Activated CD4-positive, alpha-beta T cell treated with anti-CD3 and anti-CD28 coated beads for 36 hours (primary cell): ENCODE measurements at regions of chr17 and their contacts with region 1.

Region 1: DNA sequence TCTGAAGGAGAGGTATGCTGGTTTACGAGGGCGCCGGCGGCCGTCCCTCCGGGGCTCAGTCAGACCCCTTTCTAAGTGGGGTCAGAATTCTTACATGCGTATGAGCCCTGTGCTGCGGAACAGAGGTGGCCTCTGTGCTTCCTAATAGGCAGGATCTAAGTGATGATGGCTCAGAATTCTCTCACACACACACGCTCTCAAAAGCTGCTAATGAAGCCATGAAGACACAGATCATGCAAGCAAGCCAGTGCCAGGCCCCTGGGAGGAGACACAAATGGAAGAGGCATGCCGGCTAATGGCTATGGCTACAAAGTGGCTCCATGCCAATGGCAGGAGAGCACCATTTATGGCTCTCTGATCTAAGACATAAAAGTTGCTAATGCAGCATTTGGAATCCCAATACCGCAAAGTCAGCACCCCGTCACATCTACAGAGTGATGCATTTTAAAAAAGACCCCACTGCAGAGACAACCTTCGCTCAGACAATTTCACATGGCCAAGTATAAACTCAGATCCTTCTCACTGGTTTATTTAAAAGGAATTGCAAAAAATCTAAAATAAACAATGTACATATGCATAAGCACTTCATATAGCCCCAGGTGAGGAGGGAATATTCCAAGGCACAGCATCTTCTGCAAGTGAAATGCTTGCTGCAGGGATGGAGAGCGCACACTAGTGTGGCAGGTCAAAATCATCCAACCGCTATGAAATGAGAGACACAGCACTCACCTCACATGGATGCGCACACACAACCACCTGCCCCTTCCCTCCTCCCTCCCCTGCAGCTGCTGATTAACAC is 24.5 kb downstream of the NPLOC4 start:
- DNase-seq: no peak
- ATAC-seq: no peak
- H3K4me3 Mint-ChIP-seq: no peak overlapping the region
- H3K27ac Mint-ChIP-seq: no peak overlapping the region
- H3K4me1 Mint-ChIP-seq: peaks cover 19% of the 10 kb centered on the region
- H3K27me3 Mint-ChIP-seq: no peaks in the 10 kb centered on the region

Region 2: GRCh38 chr17:81593105-81593871 is 19.1 kb before region 1 on chr17:
- CTCF ChIA-PET with region 1: no interaction called
- POLR2A ChIA-PET with region 1: no interaction called
- intact Hi-C with region 1: no loop called
- DNase-seq: no peak
- ATAC-seq: no peak
- H3K4me3 Mint-ChIP-seq: no peak overlapping the region
- H3K27ac Mint-ChIP-seq: no peak overlapping the region
- H3K4me1 Mint-ChIP-seq: no peaks in the 10 kb centered on the region
- H3K27me3 Mint-ChIP-seq: no peaks in the 10 kb centered on the region

Region 3: GRCh38 chr17:81631482-81631881 is 19.1 kb after region 1 on chr17:
- CTCF ChIA-PET with region 1: interaction called, 4 read pairs
- POLR2A ChIA-PET with region 1: interaction called, 3 read pairs
- intact Hi-C with region 1: loop called in 1 of 2 experiments (anchors 2 kb)
- DNase-seq: no peak
- ATAC-seq: no peak
- H3K4me3 Mint-ChIP-seq: no peak overlapping the region
- H3K27ac Mint-ChIP-seq: no peak overlapping the region
- H3K4me1 Mint-ChIP-seq: peaks cover 20% of the 10 kb centered on the region
- H3K27me3 Mint-ChIP-seq: no peaks in the 10 kb centered on the region

Region 4: DNA sequence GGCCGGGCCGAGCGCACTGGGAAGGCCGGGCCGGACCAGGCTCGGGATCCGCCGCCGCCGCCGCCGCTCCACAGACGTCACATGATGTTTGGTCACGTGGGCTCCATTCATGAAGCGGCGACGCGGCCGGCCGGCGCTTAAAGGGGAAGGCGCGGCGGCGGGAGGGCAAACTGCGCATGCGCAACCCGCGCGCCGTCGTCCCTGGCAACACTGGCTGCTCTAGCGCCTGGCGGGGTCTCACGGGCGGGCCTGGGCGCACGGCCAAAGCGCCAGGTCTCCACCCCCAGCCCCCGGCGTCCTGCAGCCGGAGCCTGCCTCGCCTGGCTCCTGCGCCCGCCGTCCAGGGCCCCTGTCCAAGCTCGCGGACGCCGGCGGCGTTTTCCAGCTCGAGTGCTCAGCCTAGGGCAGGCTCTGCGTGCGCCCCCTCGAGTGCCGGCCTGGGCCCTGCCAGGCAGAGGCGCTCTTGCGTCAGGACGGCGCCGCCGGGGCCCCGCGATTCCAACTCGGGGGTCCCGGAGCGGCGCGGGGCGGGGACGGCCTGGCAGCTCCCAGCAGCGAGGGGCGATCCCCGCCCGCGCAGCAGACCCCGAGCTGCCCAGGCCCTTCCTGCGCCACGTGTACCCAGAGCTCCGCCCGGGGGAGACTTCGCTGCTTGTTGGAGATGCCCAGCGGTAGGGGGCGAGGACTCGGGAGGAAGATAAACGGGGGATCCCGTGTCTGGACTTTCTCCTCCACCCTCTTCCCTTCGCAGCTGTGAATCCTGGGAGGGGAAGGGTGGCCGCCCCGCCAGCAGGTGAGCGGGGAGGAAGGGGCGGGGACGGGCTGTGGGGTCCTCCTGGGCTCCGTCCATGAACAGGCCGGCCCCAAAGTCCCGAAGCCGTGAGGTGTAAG is 315.5 kb after region 1 on chr17 and contains the start of gene MAFG:
- CTCF ChIA-PET with region 1: no interaction called
- POLR2A ChIA-PET with region 1: no interaction called
- intact Hi-C with region 1: no loop called
- DNase-seq: peak; percentile 94
- ATAC-seq: peak; percentile 62
- H3K4me3 Mint-ChIP-seq: peak within 1 kb of the TSS; percentile 85
- H3K27ac Mint-ChIP-seq: peak within 1 kb of the TSS; percentile 85
- H3K4me1 Mint-ChIP-seq: peaks cover 32% of the 10 kb centered on the region
- H3K27me3 Mint-ChIP-seq: peaks cover 2% of the 10 kb centered on the region
- total RNA-seq, gene MAFG: 15.3 to 18.3 TPM